H1 (cell line): ENCODE measurements at regions of chr7 and their contacts with region 1.

Region 1: DNA sequence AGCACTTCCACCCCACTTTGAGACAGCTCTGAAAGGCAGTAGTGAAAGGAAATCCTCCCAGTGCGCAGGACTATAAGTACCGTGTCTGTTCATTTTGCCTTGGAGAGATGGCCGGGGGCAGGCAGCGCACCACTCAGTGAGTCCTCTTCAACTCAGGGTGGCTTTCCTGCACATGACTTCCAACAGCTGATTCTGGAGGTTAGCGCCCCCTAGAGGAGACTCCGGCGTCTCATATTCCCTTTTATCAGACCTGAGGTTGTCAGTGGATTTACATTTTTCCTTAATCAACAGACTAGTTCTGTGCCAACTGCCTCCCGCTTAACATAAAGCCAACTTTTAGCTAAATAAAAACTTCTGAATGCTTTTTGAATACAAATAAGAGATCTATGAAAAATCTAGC is 101.0 kb downstream of the HERPUD2 start:
- DNase-seq: peak; percentile 23 to 86
- H3K4me3 ChIP-seq: no peak overlapping the region
- H3K27ac ChIP-seq: no peak overlapping the region
- H3K4me1 ChIP-seq: no peaks in the 10 kb centered on the region
- H3K27me3 ChIP-seq: no peaks in the 10 kb centered on the region
- CTCF ChIP-seq: peak; percentile 70 to 78 (median 74)
- EP300 ChIP-seq: no peak
- POLR2A ChIP-seq: no peak
- RAD21 ChIP-seq: peak; percentile 40 to 57

Region 2: GRCh38 chr7:35555934-35556333 is 38.0 kb before region 1 on chr7:
- CTCF ChIA-PET with region 1: interaction called, 10 read pairs
- POLR2A ChIA-PET with region 1: no interaction called
- DNase-seq: no peak
- H3K4me3 ChIP-seq: no peak overlapping the region
- H3K27ac ChIP-seq: no peak overlapping the region
- H3K4me1 ChIP-seq: 0 out of 7 replicates have a peak, but pooled peaks cover 0 to 2% (median 0%) of the 10 kb centered on the region in 4 experiments
- H3K27me3 ChIP-seq: no peaks in the 10 kb centered on the region
- CTCF ChIP-seq: no peak
- EP300 ChIP-seq: no peak
- POLR2A ChIP-seq: no peak
- RAD21 ChIP-seq: no peak

Region 3: GRCh38 chr7:35571611-35572240 is 22.2 kb before region 1 on chr7:
- CTCF ChIA-PET with region 1: interaction called, 22 read pairs
- POLR2A ChIA-PET with region 1: no interaction called
- DNase-seq: no peak
- H3K4me3 ChIP-seq: no peak overlapping the region
- H3K27ac ChIP-seq: no peak overlapping the region
- H3K4me1 ChIP-seq: no peaks in the 10 kb centered on the region
- H3K27me3 ChIP-seq: no peaks in the 10 kb centered on the region
- CTCF ChIP-seq: no peak
- EP300 ChIP-seq: no peak
- POLR2A ChIP-seq: no peak
- RAD21 ChIP-seq: no peak

Region 4: DNA sequence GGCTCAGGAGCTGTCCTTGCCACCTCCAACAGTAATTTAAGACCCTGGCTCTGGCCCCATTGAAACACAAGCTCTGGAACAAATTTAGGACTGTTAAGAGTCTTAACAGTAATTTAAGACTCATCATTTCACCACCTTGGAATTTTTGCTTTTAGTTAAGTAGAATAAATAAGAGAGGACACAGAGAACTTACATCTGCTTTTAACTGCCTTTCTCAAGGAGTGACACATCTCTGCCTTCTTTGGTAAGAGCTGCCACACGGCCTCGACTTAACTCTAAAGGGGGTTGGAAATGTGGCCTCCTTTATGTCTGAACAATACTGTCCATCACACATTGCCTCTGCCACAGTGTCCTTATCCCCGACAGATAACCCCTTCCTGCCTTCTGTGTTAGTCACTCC is 23.1 kb after region 1 on chr7:
- CTCF ChIA-PET with region 1: interaction called, 85 read pairs
- POLR2A ChIA-PET with region 1: no interaction called
- DNase-seq: no peak
- H3K4me3 ChIP-seq: no peak overlapping the region
- H3K27ac ChIP-seq: no peak overlapping the region
- H3K4me1 ChIP-seq: no peaks in the 10 kb centered on the region
- H3K27me3 ChIP-seq: no peaks in the 10 kb centered on the region
- CTCF ChIP-seq: no peak
- EP300 ChIP-seq: no peak
- POLR2A ChIP-seq: no peak
- RAD21 ChIP-seq: no peak